ENCODE measurements at regions of chr6 and their contacts with region 1.

Region 1: DNA sequence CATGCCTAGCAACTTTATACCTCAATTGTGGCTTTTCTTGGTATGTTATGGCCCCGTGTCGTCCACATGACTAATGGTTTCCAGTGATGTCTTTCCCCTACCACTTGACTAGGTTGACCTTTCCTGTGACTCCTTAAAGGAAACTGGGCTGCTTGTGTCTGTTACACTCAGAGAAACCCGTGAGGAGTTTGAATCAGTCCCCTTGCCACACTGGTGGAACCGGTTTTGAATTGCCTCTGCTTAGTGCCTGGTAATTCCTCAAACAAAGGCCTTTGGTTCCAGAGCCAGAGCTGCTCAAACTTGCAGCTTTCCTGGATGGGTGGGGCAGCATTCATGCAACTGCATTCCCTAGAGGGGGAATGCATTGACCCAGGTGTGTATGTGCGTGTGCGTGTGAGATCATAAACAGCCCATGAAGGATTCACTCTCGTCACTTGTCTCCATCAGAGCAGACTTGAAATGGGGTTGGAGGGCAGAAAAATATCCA is 22.0 kb downstream of the ECT2L start:
- DNase-seq: no peak
- H3K4me3 ChIP-seq: no peak overlapping the region
- H3K27ac ChIP-seq: no peak overlapping the region
- H3K4me1 ChIP-seq: peaks cover 0 to 9% (median 4%) of the 10 kb centered on the region in 4 donors
- H3K27me3 ChIP-seq: no peaks in the 10 kb centered on the region
- CTCF ChIP-seq: no peak
- EP300 ChIP-seq: no peak
- POLR2A ChIP-seq: no peak

Region 2: DNA sequence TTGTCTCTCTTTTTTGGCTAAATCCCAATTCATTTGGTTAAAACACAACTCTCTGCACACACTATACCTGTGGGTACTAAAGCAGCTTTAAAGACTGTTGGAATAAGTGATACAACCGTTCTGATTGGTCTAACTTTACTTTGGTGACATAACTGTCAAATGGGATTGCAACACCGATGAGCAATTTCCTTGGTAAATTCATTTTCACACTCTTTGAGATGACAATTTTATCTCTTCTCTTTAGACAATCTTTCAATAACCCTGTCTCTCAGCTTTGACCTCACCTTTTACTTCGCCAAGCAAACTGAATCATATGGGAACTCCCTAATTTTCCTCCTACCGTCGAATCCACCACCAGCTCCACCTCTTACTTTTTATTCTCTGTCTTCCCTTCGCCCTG is 38.8 kb after region 1 on chr6:
- intact Hi-C with region 1: no loop called
- DNase-seq: no peak
- H3K4me3 ChIP-seq: no peak overlapping the region
- H3K27ac ChIP-seq: no peak overlapping the region
- H3K4me1 ChIP-seq: no peaks in the 10 kb centered on the region
- H3K27me3 ChIP-seq: no peaks in the 10 kb centered on the region
- CTCF ChIP-seq: no peak
- EP300 ChIP-seq: no peak
- POLR2A ChIP-seq: no peak

Region 3: GRCh38 chr6:138896104-138896756 is 78.4 kb after region 1 on chr6:
- intact Hi-C with region 1: loop called (anchors 5 kb)
- DNase-seq: no peak
- H3K4me3 ChIP-seq: no peak overlapping the region
- H3K27ac ChIP-seq: no peak overlapping the region
- H3K4me1 ChIP-seq: no peaks in the 10 kb centered on the region
- H3K27me3 ChIP-seq: no peaks in the 10 kb centered on the region
- CTCF ChIP-seq: no peak
- EP300 ChIP-seq: no peak
- POLR2A ChIP-seq: no peak

Region 4: DNA sequence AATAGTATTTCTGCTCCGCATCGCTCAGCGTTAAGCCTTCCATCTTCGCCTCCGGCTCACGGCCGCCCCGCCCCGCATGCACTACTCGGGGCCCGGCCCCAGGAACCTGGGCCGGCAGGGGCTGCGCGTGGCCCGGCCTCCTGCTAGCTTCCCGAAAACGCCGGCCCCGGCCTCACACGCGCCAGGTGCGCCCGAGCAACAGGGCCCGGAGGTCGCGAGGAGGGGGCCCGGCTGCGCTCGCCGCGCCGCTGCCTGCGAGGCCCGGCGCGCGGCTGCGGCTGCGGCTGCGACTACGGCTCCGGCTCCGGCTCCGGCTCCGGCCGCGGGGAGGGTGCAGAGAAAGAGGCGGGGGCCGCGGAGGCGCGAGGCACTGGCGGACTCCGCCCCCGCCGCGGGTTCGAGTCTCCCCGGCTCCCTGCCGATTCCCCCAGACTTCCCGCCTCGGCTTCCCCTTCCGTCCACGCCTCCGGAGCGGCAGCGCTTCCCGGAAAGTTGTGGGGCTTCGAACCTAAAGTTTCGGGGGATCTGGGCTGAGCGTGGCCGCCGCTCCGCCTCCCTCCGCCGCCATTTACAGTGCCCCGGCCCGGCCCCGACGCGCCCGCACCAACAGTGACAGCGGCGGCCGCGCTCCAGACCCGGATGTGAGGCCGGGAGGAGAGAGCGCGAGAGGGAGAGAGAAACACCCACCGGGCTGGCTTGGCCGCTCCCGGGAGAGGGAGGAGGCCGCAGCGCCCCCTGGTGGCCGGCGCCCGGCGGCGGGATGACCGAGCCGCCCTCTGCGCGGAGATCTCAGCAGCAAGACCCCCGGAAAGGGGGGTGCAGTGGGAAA is 170.0 kb after region 1 on chr6 and contains the start of gene REPS1:
- intact Hi-C with region 1: loop called (anchors 1 kb)
- DNase-seq: peak; percentile 95
- H3K4me3 ChIP-seq: peak within 1 kb of the TSS; percentile 96 to 99 (median 96)
- H3K27ac ChIP-seq: peak within 1 kb of the TSS; percentile 88 to 93 (median 92)
- H3K4me1 ChIP-seq: peaks cover 30 to 47% (median 46%) of the 10 kb centered on the region in 4 donors
- H3K27me3 ChIP-seq: no peaks in the 10 kb centered on the region
- CTCF ChIP-seq: peak in 2 of 3 experiments; percentile 93 to 99
- EP300 ChIP-seq: no peak
- POLR2A ChIP-seq: no peak
- total RNA-seq, gene REPS1: 23.4 to 43.2 (median 30.1) TPM

Region 5: GRCh38 chr6:139149383-139149782 is 331.5 kb after region 1 on chr6:
- intact Hi-C with region 1: loop called (anchors 10 kb)
- DNase-seq: no peak
- H3K4me3 ChIP-seq: no peak overlapping the region
- H3K27ac ChIP-seq: no peak overlapping the region
- H3K4me1 ChIP-seq: peaks cover 55 to 76% (median 72%) of the 10 kb centered on the region in 4 donors
- H3K27me3 ChIP-seq: no peaks in the 10 kb centered on the region
- CTCF ChIP-seq: no peak
- EP300 ChIP-seq: no peak
- POLR2A ChIP-seq: no peak

Region 6: GRCh38 chr6:139364302-139364981 is 546.6 kb after region 1 on chr6:
- intact Hi-C with region 1: loop called (anchors 5 kb)
- DNase-seq: no peak
- H3K4me3 ChIP-seq: no peak overlapping the region
- H3K27ac ChIP-seq: no peak overlapping the region
- H3K4me1 ChIP-seq: peaks cover 7 to 22% (median 9%) of the 10 kb centered on the region in 4 donors
- H3K27me3 ChIP-seq: no peaks in the 10 kb centered on the region
- CTCF ChIP-seq: peak; percentile 69 to 83 (median 79)
- EP300 ChIP-seq: no peak
- POLR2A ChIP-seq: no peak